ENCODE measurements at regions of chr1 and their contacts with region 1.

Region 1: GRCh38 chr1:214584805-214585766 is 17.9 kb upstream of the CENPF start:
- DNase-seq: no peak
- H3K4me3 Mint-ChIP-seq: no peak overlapping the region
- H3K27ac Mint-ChIP-seq: no peak overlapping the region
- H3K4me1 Mint-ChIP-seq: peaks cover 45% of the 10 kb centered on the region
- H3K27me3 Mint-ChIP-seq: no peaks in the 10 kb centered on the region
- CTCF ChIP-seq: peak; percentile 44

Region 2: DNA sequence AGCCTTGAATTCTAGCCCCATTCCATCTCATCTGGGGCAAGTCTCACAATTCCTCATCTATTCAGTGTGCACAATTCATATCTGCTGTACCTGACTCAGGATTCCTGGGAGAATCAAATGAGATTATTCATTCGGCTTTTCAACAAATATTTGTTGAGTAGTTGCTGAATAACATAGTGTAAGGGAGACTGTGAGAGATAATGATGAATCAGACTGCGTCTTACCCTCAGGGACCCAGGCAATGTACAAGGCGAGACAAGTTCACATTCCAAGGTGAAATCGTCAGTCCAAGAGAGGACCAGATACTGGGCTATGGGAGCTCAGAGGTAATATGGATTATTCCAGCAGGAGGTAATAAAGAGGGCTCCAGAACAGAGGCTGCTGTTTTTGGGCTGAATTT is 371.9 kb before region 1 on chr1:
- CTCF ChIA-PET with region 1: no interaction called
- intact Hi-C with region 1: loop called (anchors 5 kb)
- DNase-seq: no peak
- H3K4me3 Mint-ChIP-seq: no peak overlapping the region
- H3K27ac Mint-ChIP-seq: no peak overlapping the region
- H3K4me1 Mint-ChIP-seq: peaks cover 38% of the 10 kb centered on the region
- H3K27me3 Mint-ChIP-seq: peaks cover 14% of the 10 kb centered on the region
- CTCF ChIP-seq: no peak

Region 3: GRCh38 chr1:214328770-214329469 is 256.2 kb before region 1 on chr1:
- CTCF ChIA-PET with region 1: interaction called, 79 read pairs
- intact Hi-C with region 1: loop called (anchors 1 kb)
- DNase-seq: peak; percentile 83
- H3K4me3 Mint-ChIP-seq: no peak overlapping the region
- H3K27ac Mint-ChIP-seq: no peak overlapping the region
- H3K4me1 Mint-ChIP-seq: no peaks in the 10 kb centered on the region
- H3K27me3 Mint-ChIP-seq: no peaks in the 10 kb centered on the region
- CTCF ChIP-seq: peak; percentile 88

Region 4: GRCh38 chr1:214446772-214447556 is 138.1 kb before region 1 on chr1:
- CTCF ChIA-PET with region 1: no interaction called
- intact Hi-C with region 1: loop called (anchors 2 kb)
- DNase-seq: peak; percentile 88
- H3K4me3 Mint-ChIP-seq: peak overlapping the region; percentile 47
- H3K27ac Mint-ChIP-seq: peak overlapping the region; percentile 85
- H3K4me1 Mint-ChIP-seq: peaks cover 76% of the 10 kb centered on the region
- H3K27me3 Mint-ChIP-seq: no peaks in the 10 kb centered on the region
- CTCF ChIP-seq: no peak

Region 5: DNA sequence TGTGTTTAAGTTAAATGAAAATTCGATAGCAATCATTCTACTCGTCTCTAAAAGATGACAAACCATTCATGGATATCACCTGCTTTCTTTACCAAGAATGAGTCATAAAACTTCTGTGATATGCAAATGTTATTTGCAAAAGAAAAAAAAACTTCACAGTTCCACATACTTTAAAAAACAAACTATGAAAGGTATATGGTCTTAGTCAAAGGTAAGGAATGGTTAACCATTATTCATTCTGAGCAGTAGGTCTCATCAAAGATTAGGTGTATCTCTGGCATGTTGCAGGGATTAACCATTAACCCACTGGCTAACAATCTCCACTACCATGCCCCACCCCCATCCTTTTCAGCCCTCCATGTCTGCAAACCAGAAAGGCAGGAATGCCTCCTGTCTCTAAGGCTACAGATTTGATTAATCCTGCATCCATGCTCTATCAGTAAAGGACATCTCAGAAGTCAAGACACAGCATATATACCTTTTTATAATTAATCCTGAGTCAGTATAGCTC is 78.1 kb before region 1 on chr1:
- CTCF ChIA-PET with region 1: no interaction called
- intact Hi-C with region 1: loop called (anchors 2 kb)
- DNase-seq: peak; percentile 93
- H3K4me3 Mint-ChIP-seq: peak overlapping the region; percentile 39
- H3K27ac Mint-ChIP-seq: peak overlapping the region; percentile 83
- H3K4me1 Mint-ChIP-seq: peaks cover 58% of the 10 kb centered on the region
- H3K27me3 Mint-ChIP-seq: no peaks in the 10 kb centered on the region
- CTCF ChIP-seq: no peak

Region 6: GRCh38 chr1:214551436-214552173 is 33.5 kb before region 1 on chr1 and contains the start of gene PTPN14:
- CTCF ChIA-PET with region 1: interaction called, 14 read pairs
- intact Hi-C with region 1: loop called (anchors 1 kb)
- DNase-seq: peak; percentile 96
- H3K4me3 Mint-ChIP-seq: peak within 1 kb of the TSS; percentile 78
- H3K27ac Mint-ChIP-seq: peak within 1 kb of the TSS; percentile 86
- H3K4me1 Mint-ChIP-seq: peaks cover 26% of the 10 kb centered on the region
- H3K27me3 Mint-ChIP-seq: no peaks in the 10 kb centered on the region
- CTCF ChIP-seq: peak; percentile 24
- total RNA-seq, gene PTPN14: 72.4 and 77.4 TPM in 2 replicates